Activated CD4-positive, alpha-beta T cell treated with anti-CD3 and anti-CD28 coated beads for 36 hours (primary cell): ENCODE measurements at regions of chr7 and their contacts with region 1.

Region 1: DNA sequence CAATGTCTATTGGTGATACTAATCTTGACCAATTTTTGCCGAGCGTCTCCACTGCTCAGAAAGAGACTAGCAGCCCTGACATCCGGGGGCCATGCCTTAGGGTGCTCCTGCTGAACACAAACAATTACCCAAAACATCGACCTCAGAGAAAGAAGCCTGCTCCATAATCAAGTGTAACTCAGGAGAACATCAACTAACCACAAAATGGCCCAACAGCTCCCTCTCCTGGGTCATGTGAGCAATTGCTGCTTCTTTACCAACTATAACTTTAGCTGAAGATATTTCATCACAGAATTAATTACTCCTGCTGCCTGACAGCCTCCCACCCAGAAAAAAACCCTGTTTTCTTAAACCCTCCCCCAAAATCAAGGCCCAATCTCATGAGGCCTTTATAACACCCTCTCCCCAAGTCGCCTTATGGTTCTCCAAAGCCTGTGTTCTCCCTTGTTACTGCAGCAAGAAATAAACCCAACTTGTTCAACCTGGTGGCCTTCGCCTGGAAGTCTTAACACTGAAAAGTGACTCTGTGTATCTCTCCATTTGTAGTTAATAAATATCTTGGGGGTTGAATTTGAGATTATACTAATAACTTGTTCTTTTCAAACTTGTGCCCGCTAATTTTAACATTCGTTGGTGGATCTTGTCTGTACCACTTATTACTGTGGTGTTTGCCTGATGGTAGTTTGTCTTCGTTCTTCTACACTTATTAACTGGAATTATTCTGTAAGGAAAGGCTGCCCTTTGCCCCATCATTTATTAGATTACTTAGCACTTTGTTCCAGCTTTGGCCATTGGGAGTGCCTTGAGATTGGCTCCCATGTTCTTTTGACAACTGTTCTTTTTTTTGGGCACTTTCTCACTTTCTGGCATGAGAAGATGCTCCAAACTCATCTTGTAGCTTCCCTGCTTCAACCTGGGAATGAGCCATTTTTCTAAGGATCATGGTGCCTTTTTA is 21.2 kb upstream of the RAMP3 start:
- DNase-seq: peak; percentile 82
- ATAC-seq: peak; percentile 91
- H3K4me3 Mint-ChIP-seq: no peak overlapping the region
- H3K27ac Mint-ChIP-seq: no peak overlapping the region
- H3K4me1 Mint-ChIP-seq: peaks cover 11% of the 10 kb centered on the region
- H3K27me3 Mint-ChIP-seq: no peaks in the 10 kb centered on the region

Region 2: DNA sequence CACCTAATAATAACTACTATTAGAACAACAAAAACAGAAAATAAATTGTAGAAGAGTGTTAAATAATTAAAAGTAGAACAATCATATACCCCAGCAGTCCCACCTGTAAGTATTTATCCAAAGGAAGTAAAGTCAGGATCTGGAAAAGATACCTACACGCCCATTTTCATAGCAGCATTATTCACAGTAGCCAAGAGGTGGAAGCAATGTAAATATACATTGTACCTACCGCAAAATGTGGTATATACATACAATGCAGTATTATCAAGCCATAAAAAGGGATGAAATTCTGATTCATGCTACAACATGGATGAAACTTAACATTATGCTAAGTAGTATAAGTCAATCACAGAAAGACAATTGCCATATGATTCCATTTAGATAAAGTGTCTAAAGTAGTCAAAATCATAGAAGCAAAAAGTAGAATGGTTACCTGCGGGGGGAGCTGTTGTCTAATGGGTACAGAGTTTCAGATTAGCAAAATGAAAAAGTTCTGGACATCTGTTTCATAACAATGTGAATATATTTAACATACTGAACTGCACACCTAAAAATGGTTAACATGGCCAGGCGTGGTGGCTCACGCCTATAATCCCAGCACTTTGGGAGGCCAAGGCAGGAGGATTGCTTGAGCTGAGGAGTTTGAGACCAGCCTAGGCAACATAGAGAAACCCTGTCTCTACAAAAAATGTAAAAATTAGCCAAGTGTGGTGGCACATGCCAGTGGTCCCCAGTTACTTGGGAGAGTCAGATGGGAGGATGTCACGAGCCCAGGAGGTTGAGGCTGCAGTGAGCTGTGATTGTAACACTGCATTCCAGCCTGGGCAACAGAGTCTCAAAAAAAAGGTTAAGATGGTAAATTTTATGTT is 548.3 kb before region 1 on chr7:
- CTCF ChIA-PET with region 1: no interaction called
- POLR2A ChIA-PET with region 1: no interaction called
- intact Hi-C with region 1: loop called (anchors 1 to 2 kb)
- DNase-seq: peak; percentile 75
- ATAC-seq: peak; percentile 89
- H3K4me3 Mint-ChIP-seq: no peak overlapping the region
- H3K27ac Mint-ChIP-seq: peak overlapping the region; percentile 31
- H3K4me1 Mint-ChIP-seq: peaks cover 8% of the 10 kb centered on the region
- H3K27me3 Mint-ChIP-seq: no peaks in the 10 kb centered on the region

Region 3: DNA sequence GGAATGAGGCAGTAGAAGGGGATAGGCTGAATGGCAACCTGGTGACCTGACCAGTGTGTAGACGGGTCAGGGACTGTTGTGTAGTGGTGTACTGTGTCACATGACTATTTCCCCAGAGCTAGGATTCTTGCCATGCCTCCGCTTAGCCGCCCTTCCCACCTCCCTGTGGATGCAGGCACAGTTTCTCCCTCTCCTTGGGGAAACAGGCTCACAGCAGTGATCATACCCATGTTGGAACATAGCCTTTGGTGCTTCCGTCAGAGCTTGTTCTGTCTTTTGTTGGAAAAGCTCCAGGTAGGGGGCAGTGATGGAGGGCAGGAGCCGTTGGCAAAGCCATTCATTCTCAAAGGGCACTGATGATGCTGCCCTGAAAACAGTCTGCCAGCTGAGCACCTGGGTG is 485.6 kb before region 1 on chr7:
- CTCF ChIA-PET with region 1: no interaction called
- POLR2A ChIA-PET with region 1: no interaction called
- intact Hi-C with region 1: no loop called
- DNase-seq: no peak
- ATAC-seq: no peak
- H3K4me3 Mint-ChIP-seq: no peak overlapping the region
- H3K27ac Mint-ChIP-seq: no peak overlapping the region
- H3K4me1 Mint-ChIP-seq: no peaks in the 10 kb centered on the region
- H3K27me3 Mint-ChIP-seq: no peaks in the 10 kb centered on the region

Region 4: DNA sequence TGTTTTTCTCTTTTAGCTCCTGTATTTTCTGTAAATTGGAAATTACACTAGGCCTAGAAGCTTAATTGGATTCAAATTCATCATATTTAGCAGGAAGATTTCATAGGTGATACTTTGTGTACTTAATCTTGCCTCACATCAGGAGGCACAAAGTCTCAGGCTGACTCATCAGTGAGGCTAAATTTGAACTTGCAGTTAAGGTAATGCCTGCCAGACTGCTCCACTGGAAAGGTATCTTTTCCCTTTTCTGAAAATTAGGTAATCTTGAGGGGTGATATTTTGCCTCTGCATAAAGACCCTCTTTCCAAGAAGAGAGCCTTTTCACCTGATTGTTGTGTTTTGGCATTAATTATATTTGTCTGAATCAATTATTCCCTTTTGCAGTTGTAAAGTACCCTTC is 325.3 kb before region 1 on chr7:
- CTCF ChIA-PET with region 1: interaction called, 3 read pairs
- POLR2A ChIA-PET with region 1: no interaction called
- intact Hi-C with region 1: loop called in 1 of 2 experiments (anchors 2 kb)
- DNase-seq: no peak
- ATAC-seq: peak; percentile 30
- H3K4me3 Mint-ChIP-seq: no peak overlapping the region
- H3K27ac Mint-ChIP-seq: no peak overlapping the region
- H3K4me1 Mint-ChIP-seq: peaks cover 2% of the 10 kb centered on the region
- H3K27me3 Mint-ChIP-seq: no peaks in the 10 kb centered on the region

Region 5: DNA sequence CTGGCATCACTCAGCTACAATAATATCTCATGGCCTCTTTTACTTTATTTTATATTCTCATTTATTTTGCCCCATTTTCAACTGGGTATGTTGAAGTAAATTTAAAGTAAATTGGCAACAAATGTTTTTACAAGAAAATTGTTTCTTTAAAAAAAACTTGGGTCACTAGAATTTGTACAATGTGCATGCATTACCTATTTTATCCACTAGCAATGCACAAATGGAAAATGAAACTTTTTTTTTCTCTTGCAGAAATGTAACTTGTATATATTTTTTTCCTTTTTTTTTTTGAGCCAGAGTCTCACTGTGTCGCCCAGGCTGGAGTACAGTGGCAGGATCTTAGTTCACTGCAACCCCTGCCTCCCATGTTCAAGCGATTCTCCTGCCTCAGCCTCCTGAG is 278.2 kb before region 1 on chr7:
- CTCF ChIA-PET with region 1: interaction called, 19 read pairs
- POLR2A ChIA-PET with region 1: no interaction called
- intact Hi-C with region 1: loop called in 1 of 2 experiments (anchors 5 kb)
- DNase-seq: no peak
- ATAC-seq: no peak
- H3K4me3 Mint-ChIP-seq: no peak overlapping the region
- H3K27ac Mint-ChIP-seq: no peak overlapping the region
- H3K4me1 Mint-ChIP-seq: peaks cover 18% of the 10 kb centered on the region
- H3K27me3 Mint-ChIP-seq: no peaks in the 10 kb centered on the region

Region 6: GRCh38 chr7:44921607-44922359 is 214.6 kb before region 1 on chr7:
- CTCF ChIA-PET with region 1: interaction called, 11 read pairs
- POLR2A ChIA-PET with region 1: no interaction called
- intact Hi-C with region 1: loop called (anchors 1 to 5 kb)
- DNase-seq: peak; percentile 99
- ATAC-seq: peak; percentile 99
- H3K4me3 Mint-ChIP-seq: no peak overlapping the region
- H3K27ac Mint-ChIP-seq: peak overlapping the region; percentile 47
- H3K4me1 Mint-ChIP-seq: peaks cover 15% of the 10 kb centered on the region
- H3K27me3 Mint-ChIP-seq: peaks cover under 1% of the 10 kb centered on the region

Region 7: GRCh38 chr7:44973610-44974401 is 162.6 kb before region 1 on chr7:
- CTCF ChIA-PET with region 1: interaction called, 115 read pairs
- POLR2A ChIA-PET with region 1: interaction called, 20 read pairs
- intact Hi-C with region 1: loop called in 1 of 2 experiments (anchors 1 kb)
- DNase-seq: peak; percentile 74
- ATAC-seq: no peak
- H3K4me3 Mint-ChIP-seq: no peak overlapping the region
- H3K27ac Mint-ChIP-seq: peak overlapping the region; percentile 42
- H3K4me1 Mint-ChIP-seq: peaks cover 49% of the 10 kb centered on the region
- H3K27me3 Mint-ChIP-seq: no peaks in the 10 kb centered on the region